CD4-positive, alpha-beta memory T cell (primary cell): ENCODE measurements at regions of chr17 and their contacts with region 1.

Region 1: DNA sequence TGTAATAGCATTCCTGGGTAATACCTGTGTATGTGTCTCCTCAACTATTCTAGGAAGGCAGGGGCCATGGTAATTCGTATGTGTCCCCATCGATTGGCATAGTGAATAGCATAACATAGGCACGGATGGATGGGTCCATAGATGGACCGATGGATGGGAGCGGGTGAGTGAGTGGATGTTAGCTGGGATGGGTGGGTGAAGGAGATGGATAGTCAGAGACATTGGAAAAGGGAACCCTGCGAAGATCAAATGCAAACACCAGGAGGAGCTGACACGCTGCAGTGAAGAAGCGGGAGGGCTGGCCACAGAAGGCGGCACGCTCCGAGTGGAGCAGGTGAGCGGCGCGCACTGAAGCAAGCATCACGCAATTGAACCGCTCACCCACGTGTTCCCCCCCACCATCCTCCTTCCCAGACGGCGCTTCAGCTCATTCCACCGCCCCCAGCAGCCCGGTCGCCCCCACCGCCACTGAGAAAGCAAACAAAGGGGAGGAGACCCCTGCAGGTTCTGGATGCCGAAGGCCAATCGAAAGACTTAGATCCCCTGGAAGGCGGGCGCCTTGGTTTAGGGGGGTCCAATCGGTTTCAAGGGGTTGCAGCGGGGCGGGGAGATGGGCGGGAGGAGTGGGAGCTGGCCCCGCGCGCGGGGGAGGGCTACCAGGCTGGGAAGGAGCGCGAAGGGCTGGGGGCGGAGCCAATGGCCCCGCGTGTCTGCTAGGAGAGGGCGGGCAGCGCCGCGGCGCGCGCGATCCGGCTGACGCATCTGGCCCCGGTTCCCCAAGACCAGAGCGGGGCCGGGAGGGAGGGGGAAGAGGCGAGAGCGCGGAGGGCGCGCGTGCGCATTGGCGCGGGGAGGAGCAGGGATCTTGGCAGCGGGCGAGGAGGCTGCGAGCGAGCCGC is at the start of gene ARRB2:
- DNase-seq: peak; percentile 98 to 99 (median 99)
- H3K4me3 ChIP-seq: peak within 1 kb of the TSS; percentile 85 to 89
- H3K4me3 Mint-ChIP-seq: peak within 1 kb of the TSS; percentile 85 to 98 (median 96)
- H3K27ac ChIP-seq: peak within 1 kb of the TSS; percentile 79
- H3K27ac Mint-ChIP-seq: peak within 1 kb of the TSS; percentile 86 to 98 (median 91)
- H3K4me1 ChIP-seq: peaks cover 40% of the 10 kb centered on the region
- H3K4me1 Mint-ChIP-seq: peaks cover 34 to 72% (median 45%) of the 10 kb centered on the region in 4 donors
- H3K27me3 ChIP-seq: no peaks in the 10 kb centered on the region
- H3K27me3 Mint-ChIP-seq: no peaks in the 10 kb centered on the region
- total RNA-seq, gene ARRB2: 340 to 341 TPM

Region 2: DNA sequence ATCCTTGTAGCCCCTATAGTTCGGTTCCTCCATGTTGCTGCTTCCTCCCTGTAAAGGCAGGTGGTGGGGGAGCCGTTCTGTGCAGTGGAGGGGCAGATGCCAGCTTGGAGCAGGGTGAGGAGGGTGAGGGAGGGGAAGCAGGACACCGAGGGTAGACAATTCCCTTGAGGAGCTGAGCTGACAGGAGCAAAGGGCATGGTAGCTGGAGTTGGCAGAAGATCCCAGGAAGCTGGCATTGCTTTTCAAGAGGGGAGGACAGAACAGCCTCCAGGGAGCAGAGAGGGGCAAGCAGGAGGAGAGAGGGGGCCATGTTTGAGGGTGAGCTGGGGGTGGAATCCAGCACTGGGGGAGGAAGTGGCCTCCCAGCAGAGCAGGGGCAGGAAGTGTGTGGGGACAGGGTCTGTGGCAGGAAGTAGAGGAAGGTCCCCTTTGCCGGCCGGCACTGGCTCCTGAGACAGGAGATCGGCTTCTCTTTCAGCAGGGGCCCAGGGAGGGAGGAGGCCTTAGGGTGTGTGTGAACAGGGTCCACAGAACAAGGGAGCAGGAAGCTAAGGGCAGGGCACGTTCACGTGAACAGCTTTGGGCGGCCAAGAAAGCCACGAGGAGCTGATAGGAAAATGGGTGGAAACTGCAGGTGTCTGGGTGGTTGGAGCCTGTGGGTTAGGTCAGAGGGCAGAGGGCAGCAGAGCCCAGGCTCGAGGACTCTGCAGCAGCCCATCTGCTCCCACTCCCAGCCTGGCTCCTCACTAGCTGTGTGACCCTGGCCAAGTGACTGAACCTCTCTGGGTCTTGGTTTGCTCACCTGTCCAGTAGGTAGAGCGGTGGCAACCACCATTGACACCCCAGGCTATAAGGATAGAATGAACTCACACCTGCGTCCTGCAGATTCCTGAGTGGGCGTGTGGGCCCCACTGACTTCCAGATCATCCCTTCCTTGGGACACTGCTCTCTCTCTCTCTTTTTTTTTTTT is 228.8 kb before region 1 on chr17:
- CTCF ChIA-PET with region 1: no interaction called
- POLR2A ChIA-PET with region 1: no interaction called
- intact Hi-C with region 1: no loop called
- DNase-seq: peak in 3 of 5 donors; percentile 18 to 25 (median 22)
- H3K4me3 ChIP-seq: peak overlapping the region in 1 of 2 donors; percentile 30
- H3K4me3 Mint-ChIP-seq: peak overlapping the region; percentile 74 to 86 (median 82)
- H3K27ac ChIP-seq: peak overlapping the region; percentile 23
- H3K27ac Mint-ChIP-seq: peak overlapping the region; percentile 84 to 95 (median 94)
- H3K4me1 ChIP-seq: peaks cover 49% of the 10 kb centered on the region
- H3K4me1 Mint-ChIP-seq: peaks cover 20 to 61% (median 39%) of the 10 kb centered on the region in 4 donors
- H3K27me3 ChIP-seq: no peaks in the 10 kb centered on the region
- H3K27me3 Mint-ChIP-seq: no peaks in the 10 kb centered on the region

Region 3: DNA sequence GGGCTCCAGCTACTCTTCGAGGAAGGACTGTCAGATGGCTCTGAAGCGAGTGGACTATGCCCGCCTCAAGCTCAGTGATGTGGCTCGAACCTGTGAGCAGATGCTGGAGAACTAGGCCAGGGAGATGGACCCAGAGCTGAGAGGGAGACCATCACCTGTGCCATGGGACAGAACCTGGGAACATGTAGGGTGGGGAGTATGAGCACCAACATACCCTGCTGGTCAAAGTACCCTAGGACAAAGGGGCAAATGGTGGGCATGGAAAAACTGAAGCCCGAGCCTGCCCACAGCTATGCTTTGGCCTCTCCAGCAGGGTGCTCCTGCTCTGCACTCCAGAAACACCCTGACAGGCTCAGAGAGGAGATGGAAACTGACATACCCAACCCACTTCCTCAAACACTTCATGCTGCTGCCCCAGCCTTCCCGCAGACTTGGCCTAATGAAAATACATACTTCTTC is 23.1 kb after region 1 on chr17:
- CTCF ChIA-PET with region 1: interaction called, 15 read pairs
- POLR2A ChIA-PET with region 1: interaction called, 52 read pairs
- intact Hi-C with region 1: loop called (anchors 1 kb)
- DNase-seq: no peak
- H3K4me3 ChIP-seq: no peak overlapping the region
- H3K4me3 Mint-ChIP-seq: peak overlapping the region in 2 of 8 donors; percentile 51 to 67
- H3K27ac ChIP-seq: no peak overlapping the region
- H3K27ac Mint-ChIP-seq: peak overlapping the region in 1 of 7 donors; percentile 90
- H3K4me1 ChIP-seq: peaks cover 18% of the 10 kb centered on the region
- H3K4me1 Mint-ChIP-seq: peaks cover 9 to 32% (median 16%) of the 10 kb centered on the region in 4 donors
- H3K27me3 ChIP-seq: no peaks in the 10 kb centered on the region
- H3K27me3 Mint-ChIP-seq: no peaks in the 10 kb centered on the region

Region 4: DNA sequence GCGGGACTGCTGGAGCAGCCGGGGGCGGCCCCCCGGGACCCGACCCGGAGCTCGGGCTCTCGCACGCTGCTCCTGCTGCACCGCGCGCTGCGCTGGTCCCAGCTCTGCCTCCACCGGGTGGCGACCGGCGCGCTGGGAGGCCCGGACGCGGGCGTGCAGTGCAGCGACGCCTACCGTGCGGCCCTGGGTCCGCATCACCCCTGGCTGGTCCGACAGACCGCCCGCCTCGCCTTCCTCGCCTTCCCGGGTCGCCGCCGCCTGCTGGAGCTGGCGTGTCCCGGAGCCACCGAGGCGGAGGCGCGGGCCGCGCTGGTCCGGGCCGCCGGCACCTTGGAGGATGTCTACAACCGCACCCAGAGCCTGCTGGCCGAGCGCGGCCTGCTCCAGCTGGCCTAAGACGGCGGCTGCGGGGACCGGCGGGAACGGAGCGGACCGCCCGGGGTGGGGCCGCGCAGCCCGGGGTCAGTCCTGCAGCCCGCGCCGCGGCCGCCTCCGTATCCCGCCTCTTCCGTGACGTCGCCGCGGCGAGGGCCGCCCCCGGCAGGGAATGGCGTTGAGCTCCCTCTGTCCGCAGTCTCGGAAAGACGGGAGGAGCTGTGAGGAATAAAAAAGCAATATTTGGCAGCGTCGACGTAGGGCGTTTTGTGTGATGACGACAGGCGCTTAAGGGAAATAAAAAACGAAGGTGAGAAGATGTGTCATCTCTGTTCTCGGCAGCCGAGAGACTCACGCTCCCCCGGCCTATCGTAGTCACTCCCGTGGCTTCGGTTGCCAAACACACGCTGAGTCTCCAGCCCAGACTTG is 80.1 kb after region 1 on chr17:
- CTCF ChIA-PET with region 1: interaction called, 59 read pairs
- POLR2A ChIA-PET with region 1: interaction called, 81 read pairs
- intact Hi-C with region 1: loop called (anchors 1 kb)
- DNase-seq: peak; percentile 77 to 87 (median 80)
- H3K4me3 ChIP-seq: peak overlapping the region; percentile 49 to 60
- H3K4me3 Mint-ChIP-seq: peak overlapping the region; percentile 88 to 94 (median 90)
- H3K27ac ChIP-seq: peak overlapping the region; percentile 72
- H3K27ac Mint-ChIP-seq: peak overlapping the region; percentile 63 to 96 (median 88)
- H3K4me1 ChIP-seq: peaks cover 26% of the 10 kb centered on the region
- H3K4me1 Mint-ChIP-seq: peaks cover 12 to 41% (median 15%) of the 10 kb centered on the region in 4 donors
- H3K27me3 ChIP-seq: peaks cover 11% of the 10 kb centered on the region
- H3K27me3 Mint-ChIP-seq: peaks cover 22 to 23% of the 10 kb centered on the region in 2 donors

Region 5: DNA sequence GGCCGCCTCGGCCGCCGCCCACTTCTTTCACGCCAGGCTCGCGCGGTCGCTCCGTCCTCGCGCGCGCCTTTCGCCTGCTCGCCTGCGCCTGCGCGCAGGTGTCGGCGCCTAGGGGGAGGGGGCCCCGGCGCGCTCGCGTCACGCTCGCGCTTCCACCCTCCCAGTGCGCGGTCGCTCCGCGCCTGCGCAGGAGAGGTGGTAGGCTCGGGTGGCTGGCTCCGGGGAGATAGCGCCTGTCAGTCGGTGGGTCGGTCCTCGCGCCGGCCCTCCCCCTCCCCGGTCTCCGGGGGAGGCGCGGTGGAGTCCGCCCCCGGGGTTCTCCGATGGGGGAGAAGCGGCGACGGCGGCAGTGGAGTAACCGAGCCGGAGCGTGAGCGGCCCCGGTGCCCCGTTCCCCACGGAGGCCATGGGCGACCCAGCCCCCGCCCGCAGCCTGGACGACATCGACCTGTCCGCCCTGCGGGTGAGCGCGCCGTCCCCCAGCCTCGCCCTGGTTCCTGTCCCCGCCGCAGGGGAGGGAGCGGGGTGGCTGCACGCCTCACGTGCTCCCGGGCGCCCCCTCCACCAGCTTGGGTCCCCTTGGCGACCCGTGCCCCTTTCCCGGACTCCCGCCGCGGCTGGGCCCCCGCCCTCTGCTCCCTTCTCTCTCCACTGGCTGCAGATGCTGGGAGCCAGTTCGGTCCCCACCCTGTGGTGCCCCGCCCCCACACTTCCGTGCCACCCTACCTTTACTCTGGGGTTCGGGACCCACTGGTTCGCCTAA is 123.3 kb after region 1 on chr17 and contains the start of gene MINK1:
- CTCF ChIA-PET with region 1: interaction called, 5 read pairs
- POLR2A ChIA-PET with region 1: interaction called, 8 read pairs
- intact Hi-C with region 1: loop called (anchors 1 kb)
- DNase-seq: peak; percentile 89 to 92 (median 89)
- H3K4me3 ChIP-seq: peak within 1 kb of the TSS; percentile 55 to 77
- H3K4me3 Mint-ChIP-seq: peak within 1 kb of the TSS; percentile 92 to 97 (median 96)
- H3K27ac ChIP-seq: peak within 1 kb of the TSS; percentile 84
- H3K27ac Mint-ChIP-seq: peak within 1 kb of the TSS; percentile 90 to 99 (median 97)
- H3K4me1 ChIP-seq: peaks cover 34% of the 10 kb centered on the region
- H3K4me1 Mint-ChIP-seq: peaks cover 27 to 46% (median 39%) of the 10 kb centered on the region in 4 donors
- H3K27me3 ChIP-seq: no peaks in the 10 kb centered on the region
- H3K27me3 Mint-ChIP-seq: no peaks in the 10 kb centered on the region
- total RNA-seq, gene MINK1: 134 to 139 TPM

Region 6: DNA sequence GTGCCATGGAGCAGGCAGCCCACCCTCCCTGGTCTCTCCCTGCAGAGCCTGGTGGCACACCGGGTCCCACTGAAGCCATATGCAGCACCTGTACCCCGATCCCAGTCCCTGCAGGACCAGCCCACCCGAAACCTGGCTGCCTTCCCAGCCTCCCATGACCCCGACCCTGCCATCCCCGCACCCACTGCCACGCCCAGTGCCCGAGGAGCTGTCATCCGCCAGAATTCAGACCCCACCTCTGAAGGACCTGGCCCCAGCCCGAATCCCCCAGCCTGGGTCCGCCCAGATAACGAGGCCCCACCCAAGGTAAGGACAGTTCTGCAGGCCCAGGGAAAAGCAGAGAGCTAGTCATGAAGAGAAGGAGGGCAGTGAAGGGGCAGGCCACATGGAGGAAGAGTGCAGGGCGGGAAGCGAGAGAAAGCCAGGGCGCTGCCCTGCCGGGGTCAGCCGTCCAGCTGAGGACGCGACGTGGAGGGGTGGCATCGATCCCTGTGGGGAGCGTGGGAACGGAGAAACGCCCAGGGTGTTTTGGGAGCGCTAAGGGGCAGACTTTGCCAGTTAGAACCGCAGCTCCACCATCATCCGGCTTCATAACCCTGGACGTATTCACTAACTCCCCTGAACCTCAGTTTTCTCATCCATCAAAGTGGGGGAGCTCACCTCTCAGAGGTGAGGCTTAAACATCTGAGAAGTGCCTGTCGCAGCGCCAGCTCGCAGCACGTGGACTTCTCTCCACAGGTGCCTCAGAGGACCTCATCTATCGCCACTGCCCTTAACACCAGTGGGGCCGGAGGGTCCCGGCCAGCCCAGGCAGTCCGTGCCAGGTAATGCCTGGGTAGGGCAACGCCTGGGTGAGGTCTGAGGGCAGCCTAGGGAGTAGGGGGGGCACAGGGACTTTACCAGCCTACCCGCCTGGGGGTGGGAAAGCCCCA is 181.6 kb after region 1 on chr17:
- CTCF ChIA-PET with region 1: interaction called, 50 read pairs
- POLR2A ChIA-PET with region 1: interaction called, 28 read pairs
- intact Hi-C with region 1: loop called (anchors 1 kb)
- DNase-seq: no peak
- H3K4me3 ChIP-seq: no peak overlapping the region
- H3K4me3 Mint-ChIP-seq: no peak overlapping the region
- H3K27ac ChIP-seq: no peak overlapping the region
- H3K27ac Mint-ChIP-seq: no peak overlapping the region
- H3K4me1 ChIP-seq: no peaks in the 10 kb centered on the region
- H3K4me1 Mint-ChIP-seq: peaks cover 0 to 6% (median 2%) of the 10 kb centered on the region in 4 donors
- H3K27me3 ChIP-seq: no peaks in the 10 kb centered on the region
- H3K27me3 Mint-ChIP-seq: no peaks in the 10 kb centered on the region

Region 7: GRCh38 chr17:4939796-4940624 is 230.0 kb after region 1 on chr17 and contains the starts of genes RNF167 and SLC25A11:
- CTCF ChIA-PET with region 1: interaction called, 3 read pairs
- POLR2A ChIA-PET with region 1: interaction called, 41 read pairs
- intact Hi-C with region 1: loop called (anchors 1 kb)
- DNase-seq: peak; percentile 96 to 99 (median 99)
- H3K4me3 ChIP-seq: peak within 1 kb of the TSS; percentile 99
- H3K4me3 Mint-ChIP-seq: peak within 1 kb of the TSS; percentile 95 to 100 (median 98)
- H3K27ac ChIP-seq: peak within 1 kb of the TSS; percentile 81
- H3K27ac Mint-ChIP-seq: peak within 1 kb of the TSS; percentile 92 to 100 (median 98)
- H3K4me1 ChIP-seq: peaks cover 57% of the 10 kb centered on the region
- H3K4me1 Mint-ChIP-seq: peaks cover 43 to 72% (median 55%) of the 10 kb centered on the region in 4 donors
- H3K27me3 ChIP-seq: no peaks in the 10 kb centered on the region
- H3K27me3 Mint-ChIP-seq: no peaks in the 10 kb centered on the region
- total RNA-seq, gene RNF167: 154 to 172 TPM
- total RNA-seq, gene SLC25A11: 43.5 to 49.5 TPM

Region 8: GRCh38 chr17:4997302-4998026 is 287.4 kb after region 1 on chr17 and contains the starts of genes INCA1 and KIF1C:
- CTCF ChIA-PET with region 1: no interaction called
- POLR2A ChIA-PET with region 1: no interaction called
- intact Hi-C with region 1: loop called (anchors 5 kb)
- DNase-seq: peak; percentile 88 to 94 (median 92)
- H3K4me3 ChIP-seq: peak within 1 kb of the TSS; percentile 36 to 72
- H3K4me3 Mint-ChIP-seq: peak within 1 kb of the TSS; percentile 78 to 91 (median 84)
- H3K27ac ChIP-seq: peak within 1 kb of the TSS; percentile 79
- H3K27ac Mint-ChIP-seq: peak within 1 kb of the TSS; percentile 75 to 94 (median 87)
- H3K4me1 ChIP-seq: peaks cover 22% of the 10 kb centered on the region
- H3K4me1 Mint-ChIP-seq: peaks cover 10 to 42% (median 24%) of the 10 kb centered on the region in 4 donors
- H3K27me3 ChIP-seq: no peaks in the 10 kb centered on the region
- H3K27me3 Mint-ChIP-seq: no peaks in the 10 kb centered on the region
- total RNA-seq, gene INCA1: 0.36 to 0.67 TPM
- total RNA-seq, gene KIF1C: 29.8 to 36.9 TPM